SK-N-SH (cell line): ENCODE measurements at regions of chr2 and their contacts with region 1.

Region 1: DNA sequence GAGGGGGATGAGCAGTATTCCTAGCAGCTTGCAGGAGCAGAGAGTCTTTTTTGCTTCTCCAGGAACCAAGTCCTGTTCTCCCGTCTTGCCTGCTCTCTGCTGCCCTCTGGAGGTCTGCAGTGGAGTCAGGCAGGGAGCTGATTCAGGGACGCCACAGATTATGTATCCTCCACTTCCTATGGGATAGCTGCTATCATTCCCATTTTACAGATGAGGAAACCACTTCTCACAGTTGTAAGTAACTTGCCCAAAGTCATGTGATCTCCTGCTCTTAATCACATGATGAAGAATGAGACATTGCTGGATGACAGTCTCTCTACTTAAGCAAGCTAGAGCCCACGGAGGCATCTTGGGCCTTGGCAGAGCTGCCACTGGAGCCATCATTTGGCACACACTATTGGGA is 8.3 kb downstream of the SLC4A5 start:
- DNase-seq: peak; percentile 74
- H3K4me3 ChIP-seq: peak overlapping the region in 1 of 2 experiments; percentile 32; a peak in 1 of 4 replicates
- H3K27ac ChIP-seq: no peak overlapping the region
- H3K4me1 ChIP-seq: no peaks in the 10 kb centered on the region
- H3K27me3 ChIP-seq: no peaks in the 10 kb centered on the region
- CTCF ChIP-seq: peak; percentile 87
- EP300 ChIP-seq: no peak
- RAD21 ChIP-seq: peak; percentile 82

Region 2: GRCh38 chr2:74238879-74239278 is 96.1 kb before region 1 on chr2:
- CTCF ChIA-PET with region 1: interaction called, 26 read pairs
- POLR2A ChIA-PET with region 1: no interaction called
- DNase-seq: no peak
- H3K4me3 ChIP-seq: no peak overlapping the region
- H3K27ac ChIP-seq: no peak overlapping the region
- H3K4me1 ChIP-seq: no peaks in the 10 kb centered on the region
- H3K27me3 ChIP-seq: no peaks in the 10 kb centered on the region
- CTCF ChIP-seq: no peak
- EP300 ChIP-seq: no peak
- RAD21 ChIP-seq: no peak

Region 3: GRCh38 chr2:74267068-74267467 is 67.9 kb before region 1 on chr2:
- CTCF ChIA-PET with region 1: interaction called, 19 read pairs
- POLR2A ChIA-PET with region 1: no interaction called
- DNase-seq: no peak
- H3K4me3 ChIP-seq: no peak overlapping the region
- H3K27ac ChIP-seq: no peak overlapping the region
- H3K4me1 ChIP-seq: no peaks in the 10 kb centered on the region
- H3K27me3 ChIP-seq: no peaks in the 10 kb centered on the region
- CTCF ChIP-seq: 0 out of 2 replicates have a peak, but pooled peaks have one; percentile 13
- EP300 ChIP-seq: no peak
- RAD21 ChIP-seq: peak; percentile 52

Region 4: GRCh38 chr2:74317701-74318301 is 17.1 kb before region 1 on chr2:
- CTCF ChIA-PET with region 1: interaction called, 63 read pairs
- POLR2A ChIA-PET with region 1: no interaction called
- DNase-seq: no peak
- H3K4me3 ChIP-seq: no peak overlapping the region
- H3K27ac ChIP-seq: no peak overlapping the region
- H3K4me1 ChIP-seq: peaks cover 0 to 12% of the 10 kb centered on the region in 2 experiments; a peak in 2 of 4 replicates
- H3K27me3 ChIP-seq: no peaks in the 10 kb centered on the region
- CTCF ChIP-seq: no peak
- EP300 ChIP-seq: no peak
- RAD21 ChIP-seq: no peak

Region 5: DNA sequence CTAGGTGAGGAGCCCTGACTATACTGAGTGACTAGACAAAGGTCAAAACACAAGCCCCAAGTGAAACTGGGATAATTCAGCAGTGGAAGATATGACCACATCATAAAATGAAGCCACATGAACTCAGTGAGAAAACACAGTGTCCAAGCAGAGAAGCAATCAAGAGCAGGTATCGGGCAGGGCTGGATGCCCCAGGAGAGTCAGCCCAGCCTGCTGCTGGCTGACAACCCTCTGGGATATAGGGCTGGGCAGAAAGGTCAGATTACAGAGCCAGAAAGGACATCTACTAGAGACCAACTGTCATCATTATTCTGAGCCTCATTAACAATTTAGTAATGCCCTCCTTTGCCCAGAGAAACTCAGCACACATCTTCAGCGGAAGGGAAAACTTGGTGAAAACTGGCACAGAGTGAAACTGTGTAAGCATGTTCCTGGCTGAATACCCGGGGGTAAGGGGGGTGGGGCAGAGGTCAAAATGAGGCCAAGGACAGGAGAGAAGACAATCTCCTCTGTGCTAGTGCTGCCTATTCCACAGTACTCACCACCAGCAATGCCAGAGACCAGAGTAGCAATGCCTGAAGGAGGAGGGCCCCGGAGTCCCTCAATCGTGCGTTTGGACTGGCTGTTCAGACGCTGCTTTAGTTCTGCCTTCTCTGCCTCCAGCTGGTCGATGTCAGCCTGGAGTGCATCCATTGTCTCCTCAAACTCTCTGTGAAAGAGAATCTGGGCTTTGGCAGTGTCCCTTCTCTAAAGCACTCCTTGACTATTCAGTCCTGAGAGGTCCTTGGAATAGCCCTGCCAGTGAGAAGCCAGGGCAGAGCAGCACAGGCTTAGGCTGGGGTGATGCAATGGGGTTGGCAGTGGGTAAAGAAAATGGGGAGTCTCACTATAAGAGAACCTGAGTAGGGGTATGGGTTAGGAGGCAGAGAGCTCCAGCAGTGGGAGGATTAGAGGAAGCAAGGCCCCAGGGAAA is 29.9 kb after region 1 on chr2:
- CTCF ChIA-PET with region 1: interaction called, 31 read pairs
- POLR2A ChIA-PET with region 1: no interaction called
- DNase-seq: no peak
- H3K4me3 ChIP-seq: no peak overlapping the region
- H3K27ac ChIP-seq: no peak overlapping the region
- H3K4me1 ChIP-seq: no peaks in the 10 kb centered on the region
- H3K27me3 ChIP-seq: no peaks in the 10 kb centered on the region
- CTCF ChIP-seq: no peak
- EP300 ChIP-seq: no peak
- RAD21 ChIP-seq: no peak

Region 6: DNA sequence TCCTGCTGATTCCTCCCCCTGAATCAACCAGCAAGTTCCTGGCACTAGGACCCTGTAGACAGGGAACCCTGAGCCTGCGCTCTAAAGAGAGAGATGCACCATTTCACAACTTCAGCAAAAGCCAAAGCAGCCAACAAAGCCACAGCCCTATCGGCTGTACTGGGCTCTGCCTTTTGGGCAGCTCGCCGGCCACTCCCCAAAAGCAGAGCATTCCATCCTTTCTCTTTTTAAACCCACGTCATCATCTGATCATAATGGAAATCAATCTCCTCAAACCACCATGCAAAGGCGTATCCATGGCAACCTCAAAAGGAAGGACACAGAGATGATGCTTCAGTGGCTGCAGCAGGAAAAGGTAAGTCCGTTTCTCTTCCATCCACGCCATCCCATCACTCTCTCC is 50.5 kb after region 1 on chr2:
- CTCF ChIA-PET with region 1: interaction called, 52 read pairs
- POLR2A ChIA-PET with region 1: no interaction called
- DNase-seq: no peak
- H3K4me3 ChIP-seq: no peak overlapping the region
- H3K27ac ChIP-seq: no peak overlapping the region
- H3K4me1 ChIP-seq: peaks cover 9 to 16% of the 10 kb centered on the region in 2 experiments; a peak in 3 of 4 replicates
- H3K27me3 ChIP-seq: no peaks in the 10 kb centered on the region
- CTCF ChIP-seq: no peak
- EP300 ChIP-seq: no peak
- RAD21 ChIP-seq: no peak

Region 7: GRCh38 chr2:74525717-74526648 is 191.1 kb after region 1 on chr2 and contains the start of gene DQX1:
- CTCF ChIA-PET with region 1: no interaction called
- POLR2A ChIA-PET with region 1: no interaction called
- DNase-seq: peak; percentile 52
- H3K4me3 ChIP-seq: no peak within 1 kb of the TSS
- H3K27ac ChIP-seq: no peak within 1 kb of the TSS; a peak in 1 of 4 replicates
- H3K4me1 ChIP-seq: peaks cover 8 to 15% of the 10 kb centered on the region in 2 experiments
- H3K27me3 ChIP-seq: no peaks in the 10 kb centered on the region
- CTCF ChIP-seq: no peak
- EP300 ChIP-seq: no peak
- RAD21 ChIP-seq: no peak
- polyA plus RNA-seq, gene DQX1: 1.6 and 1.8 TPM in 2 replicates